Activated CD4-positive, alpha-beta T cell treated with anti-CD3 and anti-CD28 coated beads, Interleukin-2, amount 10 ng/mL, durations not matched to agents 24 days and 14 days (primary cell): ENCODE measurements at regions of chr13 and their contacts with region 1.

Region 1: GRCh38 chr13:42969558-42970172 is 22.4 kb downstream of the EPSTI1 start:
- DNase-seq: peak; percentile 93
- H3K4me3 Mint-ChIP-seq: no peak overlapping the region
- H3K27ac Mint-ChIP-seq: no peak overlapping the region
- H3K4me1 Mint-ChIP-seq: peaks cover 30% of the 10 kb centered on the region
- H3K27me3 Mint-ChIP-seq: no peaks in the 10 kb centered on the region

Region 2: GRCh38 chr13:42594970-42595571 is 374.6 kb before region 1 on chr13:
- intact Hi-C with region 1: loop called (anchors 10 kb)
- DNase-seq: peak; percentile 85
- H3K4me3 Mint-ChIP-seq: no peak overlapping the region
- H3K27ac Mint-ChIP-seq: no peak overlapping the region
- H3K4me1 Mint-ChIP-seq: no peaks in the 10 kb centered on the region
- H3K27me3 Mint-ChIP-seq: peaks cover 6% of the 10 kb centered on the region

Region 3: GRCh38 chr13:43023289-43023951 is 53.8 kb after region 1 on chr13 and contains the start of gene DNAJC15:
- intact Hi-C with region 1: loop called (anchors 1 kb)
- DNase-seq: peak; percentile 95
- H3K4me3 Mint-ChIP-seq: peak within 1 kb of the TSS; percentile 98
- H3K27ac Mint-ChIP-seq: peak within 1 kb of the TSS; percentile 94
- H3K4me1 Mint-ChIP-seq: peaks cover 24% of the 10 kb centered on the region
- H3K27me3 Mint-ChIP-seq: no peaks in the 10 kb centered on the region
- total RNA-seq, gene DNAJC15: 16.6 and 17.8 TPM in 2 replicates

Region 4: GRCh38 chr13:43132257-43132656 is 162.6 kb after region 1 on chr13:
- intact Hi-C with region 1: loop called (anchors 10 kb)
- DNase-seq: peak; percentile 58
- H3K4me3 Mint-ChIP-seq: no peak overlapping the region
- H3K27ac Mint-ChIP-seq: no peak overlapping the region
- H3K4me1 Mint-ChIP-seq: peaks cover 11% of the 10 kb centered on the region
- H3K27me3 Mint-ChIP-seq: peaks cover 18% of the 10 kb centered on the region

Region 5: DNA sequence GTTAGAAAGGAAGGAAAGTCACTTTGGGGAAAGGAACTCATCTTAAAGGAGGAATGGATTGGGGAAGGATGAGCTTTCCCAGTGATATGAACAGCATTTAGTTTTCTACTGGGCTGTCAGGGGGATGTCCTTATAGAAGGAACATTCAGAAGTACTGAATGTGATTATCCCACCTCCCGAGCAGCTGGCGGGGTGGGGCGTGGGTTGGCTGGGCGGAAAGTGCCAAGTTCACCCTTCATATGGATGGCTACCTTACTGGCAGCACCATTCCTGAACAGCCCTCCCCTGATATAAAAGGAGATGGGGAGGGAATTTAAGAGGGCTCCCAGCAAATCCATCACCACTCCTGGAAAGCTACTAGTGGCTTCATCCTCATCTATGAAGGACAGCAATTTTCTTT is 244.5 kb after region 1 on chr13:
- intact Hi-C with region 1: no loop called
- DNase-seq: no peak
- H3K4me3 Mint-ChIP-seq: no peak overlapping the region
- H3K27ac Mint-ChIP-seq: no peak overlapping the region
- H3K4me1 Mint-ChIP-seq: no peaks in the 10 kb centered on the region
- H3K27me3 Mint-ChIP-seq: peaks cover 11% of the 10 kb centered on the region

Region 6: DNA sequence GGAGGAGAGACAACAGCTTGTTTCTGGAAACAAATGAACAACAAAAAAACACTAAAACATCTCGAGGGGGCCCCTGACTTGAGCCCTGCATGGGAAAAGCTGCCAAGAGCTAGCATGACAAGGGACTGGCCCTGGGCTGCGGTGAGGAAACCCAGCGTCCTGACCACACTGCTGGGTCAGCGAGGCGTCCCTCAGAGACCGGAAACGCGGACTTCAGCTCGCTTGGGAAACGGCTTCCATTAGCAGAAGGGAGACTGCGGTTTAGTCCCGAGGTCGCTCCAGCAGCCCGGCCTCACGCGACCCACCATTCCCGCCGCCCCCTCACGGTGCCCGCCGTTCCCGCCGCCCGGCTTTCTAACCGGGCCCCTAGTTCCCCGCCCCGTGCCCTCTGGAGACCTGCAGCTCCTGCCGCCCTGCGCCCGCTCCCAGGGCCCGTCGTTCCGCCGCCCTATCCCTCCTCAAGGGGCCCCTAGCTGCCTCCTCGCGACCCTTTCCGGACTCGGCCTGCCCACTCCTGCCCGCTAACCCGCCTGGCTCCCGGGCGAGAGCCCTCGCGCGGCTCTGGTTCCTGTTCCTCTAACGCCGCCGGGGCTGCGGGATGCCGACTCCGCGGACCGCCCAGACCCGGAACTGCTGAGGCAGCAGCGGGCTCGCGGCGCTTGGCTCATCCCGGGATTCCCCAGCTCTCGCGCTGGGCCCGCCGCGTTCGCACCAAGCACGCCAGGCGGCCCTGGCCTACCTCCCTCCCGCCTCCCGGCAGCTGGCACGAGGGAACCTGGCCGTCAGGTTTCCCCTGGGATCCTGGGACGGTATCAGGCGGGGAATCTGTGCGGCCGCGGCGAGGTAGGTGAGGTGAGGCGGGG is 909.5 kb after region 1 on chr13 and contains the start of gene CCDC122:
- intact Hi-C with region 1: loop called (anchors 2 kb)
- DNase-seq: peak; percentile 93
- H3K4me3 Mint-ChIP-seq: peak within 1 kb of the TSS; percentile 89
- H3K27ac Mint-ChIP-seq: peak within 1 kb of the TSS; percentile 90
- H3K4me1 Mint-ChIP-seq: peaks cover 13% of the 10 kb centered on the region
- H3K27me3 Mint-ChIP-seq: peaks cover 17% of the 10 kb centered on the region
- total RNA-seq, gene CCDC122: 0.56 and 1.7 TPM in 2 replicates